ENCODE measurements at regions of chr2 and their contacts with region 1.

Region 1: DNA sequence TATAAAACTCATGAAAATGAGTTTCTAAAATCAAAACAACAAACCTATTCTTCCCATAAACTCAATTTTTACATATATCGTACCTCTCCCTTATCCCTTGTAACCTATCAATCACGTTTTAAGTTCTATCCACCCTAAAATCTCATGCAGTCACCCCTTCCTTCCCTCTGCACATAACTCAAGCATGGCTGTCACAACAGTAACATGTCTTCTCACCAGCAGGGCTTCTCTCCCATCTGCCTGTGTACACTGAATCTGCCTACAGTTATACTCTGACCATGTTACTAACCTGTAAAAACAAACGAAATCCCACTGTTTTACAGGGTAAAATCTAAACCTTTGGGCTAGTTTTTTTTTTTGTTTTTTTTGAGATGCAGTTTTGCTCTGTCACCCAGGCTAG is 68.2 kb downstream of the MAP4K3 start:
- DNase-seq: no peak
- H3K4me3 ChIP-seq: no peak overlapping the region
- H3K27ac ChIP-seq: no peak overlapping the region
- H3K4me1 ChIP-seq: peaks cover 3 to 12% (median 4%) of the 10 kb centered on the region in 4 experiments; a peak in 5 of 7 replicates
- H3K27me3 ChIP-seq: peaks cover 0 to 1% (median 0%) of the 10 kb centered on the region in 4 experiments; a peak in 1 of 7 replicates
- CTCF ChIP-seq: no peak
- EP300 ChIP-seq: no peak
- POLR2A ChIP-seq: no peak
- RAD21 ChIP-seq: no peak

Region 2: GRCh38 chr2:39379643-39380524 is 11.0 kb after region 1 on chr2:
- CTCF ChIA-PET with region 1: interaction called, 15 read pairs
- POLR2A ChIA-PET with region 1: interaction called, 4 read pairs
- DNase-seq: no peak
- H3K4me3 ChIP-seq: no peak overlapping the region
- H3K27ac ChIP-seq: no peak overlapping the region
- H3K4me1 ChIP-seq: peaks cover 3 to 6% (median 4%) of the 10 kb centered on the region in 4 experiments; a peak in 6 of 7 replicates
- H3K27me3 ChIP-seq: peaks cover 0 to 1% (median 0%) of the 10 kb centered on the region in 4 experiments; a peak in 1 of 7 replicates
- CTCF ChIP-seq: peak in 2 of 3 experiments; percentile 29 to 35; a peak in 2 of 4 replicates
- EP300 ChIP-seq: no peak
- POLR2A ChIP-seq: no peak
- RAD21 ChIP-seq: peak; percentile 39 to 44; a peak in 3 of 4 replicates

Region 3: GRCh38 chr2:39419282-39420223 is 50.7 kb after region 1 on chr2:
- CTCF ChIA-PET with region 1: no interaction called
- POLR2A ChIA-PET with region 1: no interaction called
- DNase-seq: no peak
- H3K4me3 ChIP-seq: no peak overlapping the region
- H3K27ac ChIP-seq: no peak overlapping the region
- H3K4me1 ChIP-seq: peaks cover 0 to 6% (median 1%) of the 10 kb centered on the region in 4 experiments; a peak in 3 of 7 replicates
- H3K27me3 ChIP-seq: no peaks in the 10 kb centered on the region
- CTCF ChIP-seq: no peak
- EP300 ChIP-seq: no peak
- POLR2A ChIP-seq: no peak
- RAD21 ChIP-seq: no peak

Region 4: DNA sequence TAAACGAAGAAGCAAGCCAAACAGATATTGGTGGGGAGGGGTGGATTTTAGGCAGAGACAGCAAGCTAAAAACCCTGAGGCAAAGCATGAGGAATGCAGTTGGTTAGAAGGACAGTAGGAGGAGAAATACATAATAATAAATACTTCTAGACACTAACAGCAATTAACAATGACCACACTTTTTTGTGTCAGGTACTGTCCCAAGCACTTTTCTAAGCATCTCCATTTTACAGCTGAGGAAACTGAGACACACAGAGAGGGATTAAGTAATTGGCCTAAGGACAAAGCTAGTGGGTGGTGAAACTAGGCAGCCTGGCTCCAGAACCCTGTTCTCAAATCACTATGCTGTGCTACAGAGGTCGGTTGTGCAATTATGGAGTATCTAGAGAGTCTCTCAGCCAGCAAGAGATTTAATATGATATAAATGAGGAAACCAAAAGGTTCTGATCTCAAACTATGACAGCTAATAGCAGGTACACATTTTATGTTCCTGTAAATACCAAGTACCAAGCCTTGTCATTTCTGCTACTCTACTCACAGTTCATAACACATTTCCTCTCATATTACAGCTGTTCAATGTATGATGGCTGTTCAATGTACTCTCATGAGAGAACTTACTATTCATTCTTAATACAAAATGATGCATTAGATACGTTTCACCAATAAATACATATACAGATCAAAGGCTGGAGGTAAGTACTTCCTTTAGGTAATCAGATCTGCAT is 62.9 kb after region 1 on chr2:
- CTCF ChIA-PET with region 1: no interaction called
- POLR2A ChIA-PET with region 1: no interaction called
- DNase-seq: no peak
- H3K4me3 ChIP-seq: no peak overlapping the region
- H3K27ac ChIP-seq: no peak overlapping the region
- H3K4me1 ChIP-seq: peaks cover 0 to 17% (median 5%) of the 10 kb centered on the region in 4 experiments; a peak in 3 of 7 replicates
- H3K27me3 ChIP-seq: no peaks in the 10 kb centered on the region
- CTCF ChIP-seq: no peak
- EP300 ChIP-seq: no peak
- POLR2A ChIP-seq: no peak
- RAD21 ChIP-seq: no peak

Measured in H1 (cell line).